Cardiac septum (tissue), 1 donor: ENCODE measurements at regions of chr11 and their contacts with region 1.

Region 1: DNA sequence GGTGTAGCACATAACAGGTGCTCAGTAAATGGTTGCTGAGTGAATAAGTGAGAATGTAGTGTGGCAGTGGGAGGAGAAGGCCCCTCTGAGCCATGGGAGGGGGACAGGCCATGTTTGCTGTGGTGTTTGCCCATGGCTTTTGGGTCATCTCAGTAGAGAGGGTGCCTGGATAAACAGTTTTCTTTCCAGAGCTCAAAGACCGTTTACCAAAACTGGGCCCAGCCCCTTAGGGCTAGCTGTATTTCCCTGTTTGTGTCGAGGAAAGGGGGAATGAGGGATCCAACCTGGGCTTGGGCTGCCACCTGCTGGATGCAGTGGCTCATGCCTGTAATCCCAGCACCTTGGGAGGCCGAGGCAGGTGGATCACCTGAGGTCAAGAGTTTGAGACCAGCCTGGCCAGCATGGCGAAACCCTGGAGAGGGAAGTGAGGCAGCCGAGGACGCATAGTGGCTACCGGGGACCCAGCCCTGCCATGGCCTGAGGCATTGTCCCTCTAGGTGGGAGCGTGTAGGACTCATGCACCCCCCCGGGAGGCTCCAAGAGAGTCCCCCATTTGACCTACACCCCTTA is 8.7 kb upstream of the LTO1 start:
- DNase-seq: peak; percentile 63

Region 2: DNA sequence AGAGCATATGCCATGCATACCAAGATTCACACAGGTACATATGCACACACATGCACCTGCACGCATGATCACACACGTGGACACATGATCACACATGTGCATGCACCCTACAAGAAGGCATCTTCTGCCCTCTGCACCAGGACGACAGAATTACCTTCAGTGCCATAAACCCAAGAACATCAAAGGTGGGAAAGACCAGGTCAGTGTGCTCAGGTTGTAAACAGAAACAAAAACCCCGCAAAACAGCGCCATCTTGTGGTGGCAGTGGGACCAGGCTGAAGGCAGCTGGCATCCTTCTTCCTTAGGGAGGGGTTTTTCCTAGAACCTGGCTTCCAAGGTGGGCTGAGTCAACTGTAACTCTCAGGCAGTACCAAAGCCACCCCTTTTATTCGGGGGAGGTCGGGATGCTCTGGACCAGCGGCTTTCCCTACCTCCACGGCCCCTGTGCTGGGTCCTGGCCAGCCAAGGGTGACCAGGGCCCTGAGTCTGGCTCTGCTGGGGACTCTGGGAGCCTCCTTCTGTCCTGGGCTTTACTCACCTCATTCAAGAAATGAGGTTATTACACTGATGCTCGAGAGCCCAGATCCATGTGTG is 204.7 kb after region 1 on chr11:
- intact Hi-C with region 1: loop called (anchors 2 kb)
- DNase-seq: no peak

Region 3: DNA sequence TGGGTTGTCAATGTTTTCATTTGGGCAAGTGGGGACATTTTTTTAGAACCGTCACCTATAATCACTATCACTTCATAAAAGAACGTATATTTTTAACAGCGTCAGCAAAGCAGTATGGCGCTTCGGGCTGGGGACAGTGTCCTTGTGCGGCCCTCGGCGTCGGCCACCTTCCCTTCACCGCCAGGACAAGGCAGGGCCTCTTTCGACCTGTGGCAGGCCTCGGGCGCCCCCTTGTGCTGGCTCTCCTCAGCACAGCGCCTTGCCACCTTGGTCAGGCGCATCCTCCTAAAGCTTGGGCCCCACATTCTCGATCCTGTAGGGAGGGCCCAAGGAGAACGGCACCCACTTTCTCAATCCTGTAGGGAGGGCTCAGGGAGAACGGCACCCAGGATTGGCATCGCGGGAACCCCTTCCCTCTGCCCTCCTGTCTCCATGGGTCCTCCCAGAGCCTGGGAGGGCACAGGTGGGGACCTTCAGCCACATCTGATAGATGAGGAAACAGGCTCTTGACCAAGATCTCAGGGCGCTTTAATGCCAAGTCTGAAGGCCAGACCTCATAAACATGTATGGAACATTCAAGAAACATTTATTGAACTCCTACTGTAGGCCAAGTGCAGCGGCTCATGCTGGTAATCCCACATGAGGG is 507.8 kb after region 1 on chr11:
- intact Hi-C with region 1: loop called (anchors 5 kb)
- DNase-seq: peak; percentile 90

Region 4: GRCh38 chr11:70399681-70400112 is 715.8 kb after region 1 on chr11:
- intact Hi-C with region 1: no loop called
- DNase-seq: peak; percentile 89